ENCODE measurements at regions of chr1 and their contacts with region 1.

Region 1: GRCh38 chr1:61141288-61142042 is 59.1 kb downstream of the NFIA start:
- DNase-seq: peak; percentile 96
- H3K4me3 Mint-ChIP-seq: peak overlapping the region; percentile 40
- H3K27ac Mint-ChIP-seq: peak overlapping the region; percentile 85
- H3K4me1 Mint-ChIP-seq: peaks cover 41% of the 10 kb centered on the region
- H3K27me3 Mint-ChIP-seq: no peaks in the 10 kb centered on the region
- CTCF ChIP-seq: no peak

Region 2: GRCh38 chr1:61077676-61078541 is 63.6 kb before region 1 on chr1:
- CTCF ChIA-PET with region 1: interaction called, 4 read pairs
- POLR2A ChIA-PET with region 1: interaction called, 154 read pairs
- intact Hi-C with region 1: no loop called
- DNase-seq: peak; percentile 100
- H3K4me3 Mint-ChIP-seq: peak overlapping the region; percentile 94
- H3K27ac Mint-ChIP-seq: peak overlapping the region; percentile 96
- H3K4me1 Mint-ChIP-seq: peaks cover 42% of the 10 kb centered on the region
- H3K27me3 Mint-ChIP-seq: no peaks in the 10 kb centered on the region
- CTCF ChIP-seq: no peak

Region 3: DNA sequence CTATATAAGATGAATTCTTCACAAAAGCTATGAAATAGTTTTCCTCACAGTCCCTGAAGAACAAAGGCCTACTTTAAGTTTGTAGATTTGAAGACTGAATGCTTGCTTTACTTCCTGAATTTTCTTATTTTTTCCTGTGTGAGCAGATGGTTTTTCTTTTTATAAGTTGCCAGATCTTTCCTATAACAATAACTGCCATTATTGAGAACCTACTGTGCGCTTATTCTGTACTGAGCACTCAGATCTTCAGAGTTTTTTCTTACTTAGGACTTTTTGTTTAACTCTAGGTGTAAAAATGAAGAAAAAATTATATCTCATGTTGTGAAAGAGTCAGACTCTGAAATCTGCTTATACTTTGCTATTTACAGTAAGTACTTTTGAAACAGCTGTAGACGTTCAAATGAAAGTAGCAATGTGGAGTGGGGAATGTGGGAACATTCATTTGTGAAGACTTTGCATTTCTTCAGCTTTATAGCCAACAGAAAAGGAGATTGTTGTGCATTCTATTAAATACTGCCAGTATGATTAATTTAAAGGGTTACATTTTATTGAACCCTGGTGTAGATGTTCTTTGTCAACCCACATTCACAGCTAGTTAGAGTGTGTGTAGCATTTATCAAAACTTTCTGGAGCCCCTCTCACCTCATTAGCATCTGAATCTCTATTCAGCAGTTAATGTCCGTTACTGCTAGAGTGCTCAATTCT is 30.2 kb before region 1 on chr1:
- CTCF ChIA-PET with region 1: interaction called, 3 read pairs
- POLR2A ChIA-PET with region 1: interaction called, 14 read pairs
- intact Hi-C with region 1: no loop called
- DNase-seq: no peak
- H3K4me3 Mint-ChIP-seq: no peak overlapping the region
- H3K27ac Mint-ChIP-seq: peak overlapping the region; percentile 49
- H3K4me1 Mint-ChIP-seq: peaks cover 30% of the 10 kb centered on the region
- H3K27me3 Mint-ChIP-seq: no peaks in the 10 kb centered on the region
- CTCF ChIP-seq: no peak

Region 4: GRCh38 chr1:61202854-61203598 is 61.6 kb after region 1 on chr1:
- CTCF ChIA-PET with region 1: interaction called, 3 read pairs
- POLR2A ChIA-PET with region 1: interaction called, 18 read pairs
- intact Hi-C with region 1: no loop called
- DNase-seq: peak; percentile 75
- H3K4me3 Mint-ChIP-seq: peak overlapping the region; percentile 57
- H3K27ac Mint-ChIP-seq: peak overlapping the region; percentile 85
- H3K4me1 Mint-ChIP-seq: peaks cover 15% of the 10 kb centered on the region
- H3K27me3 Mint-ChIP-seq: no peaks in the 10 kb centered on the region
- CTCF ChIP-seq: no peak

Region 5: DNA sequence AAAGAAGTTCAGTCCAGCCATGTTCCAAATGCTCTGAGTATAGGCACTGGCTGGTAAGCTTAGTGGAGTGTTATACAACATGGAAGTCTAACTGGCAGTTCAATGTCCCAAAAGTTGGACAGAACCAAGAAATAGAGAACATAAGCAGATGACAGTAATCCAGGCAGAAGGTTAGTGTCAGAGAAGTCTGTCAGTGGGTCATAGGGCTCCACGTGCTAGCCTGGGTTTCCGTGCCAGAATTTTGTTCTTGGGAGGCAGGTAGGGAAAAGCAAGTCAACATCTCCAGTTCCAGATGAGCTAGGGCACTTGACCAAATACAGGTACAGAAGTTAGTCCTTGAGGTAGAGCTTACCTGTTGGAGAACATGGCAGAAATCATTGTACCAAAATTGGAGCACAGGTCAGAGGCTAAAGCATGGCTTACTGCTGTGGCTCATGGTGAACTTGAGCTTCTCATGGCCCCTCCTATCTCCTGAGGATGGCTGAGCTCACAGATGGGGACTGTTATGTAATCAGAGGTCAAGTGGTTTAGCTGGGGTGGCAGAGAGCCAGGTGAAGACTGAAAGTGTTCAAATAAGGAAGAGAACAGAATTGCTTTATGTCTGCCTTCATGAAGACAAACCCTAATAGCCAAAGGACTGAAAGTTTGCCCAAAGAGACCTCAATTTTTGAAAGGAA is 111.7 kb after region 1 on chr1:
- CTCF ChIA-PET with region 1: no interaction called
- POLR2A ChIA-PET with region 1: interaction called, 14 read pairs
- intact Hi-C with region 1: no loop called
- DNase-seq: peak; percentile 96
- H3K4me3 Mint-ChIP-seq: no peak overlapping the region
- H3K27ac Mint-ChIP-seq: peak overlapping the region; percentile 92
- H3K4me1 Mint-ChIP-seq: peaks cover 35% of the 10 kb centered on the region
- H3K27me3 Mint-ChIP-seq: no peaks in the 10 kb centered on the region
- CTCF ChIP-seq: no peak

Region 6: GRCh38 chr1:61523893-61524605 is 382.6 kb after region 1 on chr1:
- CTCF ChIA-PET with region 1: no interaction called
- POLR2A ChIA-PET with region 1: no interaction called
- intact Hi-C with region 1: no loop called
- DNase-seq: no peak
- H3K4me3 Mint-ChIP-seq: no peak overlapping the region
- H3K27ac Mint-ChIP-seq: no peak overlapping the region
- H3K4me1 Mint-ChIP-seq: peaks cover 15% of the 10 kb centered on the region
- H3K27me3 Mint-ChIP-seq: no peaks in the 10 kb centered on the region
- CTCF ChIP-seq: no peak

Measured in MCF 10A (cell line).